ENCODE measurements at regions of chr3 and their contacts with region 1.

Region 1: GRCh38 chr3:149120051-149120972 is 9.1 kb upstream of the HPS3 start:
- DNase-seq: no peak
- H3K4me3 Mint-ChIP-seq: no peak overlapping the region
- H3K27ac Mint-ChIP-seq: no peak overlapping the region
- H3K4me1 Mint-ChIP-seq: peaks cover 5% of the 10 kb centered on the region
- H3K27me3 Mint-ChIP-seq: peaks cover 13% of the 10 kb centered on the region

Region 2: GRCh38 chr3:148955544-148956346 is 164.6 kb before region 1 on chr3:
- CTCF ChIA-PET with region 1: interaction called, 47 read pairs
- DNase-seq: peak; percentile 34
- H3K4me3 Mint-ChIP-seq: no peak overlapping the region
- H3K27ac Mint-ChIP-seq: no peak overlapping the region
- H3K4me1 Mint-ChIP-seq: peaks cover 9% of the 10 kb centered on the region
- H3K27me3 Mint-ChIP-seq: peaks cover 3% of the 10 kb centered on the region

Region 3: DNA sequence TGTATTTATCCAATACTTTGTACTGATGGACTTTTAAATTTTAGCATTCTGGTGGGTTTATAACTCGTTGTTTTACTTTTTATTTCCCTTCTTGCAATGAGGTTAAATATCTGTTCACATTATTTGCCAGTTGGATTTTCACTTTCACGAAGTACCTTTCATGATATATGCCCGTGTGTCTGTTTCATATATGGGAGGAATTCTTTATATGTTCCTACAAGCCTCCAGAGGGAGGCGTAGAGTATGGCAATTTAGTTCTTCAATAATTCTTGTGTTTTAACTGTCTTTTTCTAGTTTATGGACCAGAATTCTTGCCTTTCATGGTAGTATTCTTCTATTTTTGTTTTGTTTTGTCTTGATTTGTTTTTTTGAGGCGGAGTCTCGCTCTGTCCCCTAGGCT is 805.5 kb after region 1 on chr3:
- CTCF ChIA-PET with region 1: no interaction called
- DNase-seq: no peak
- H3K4me3 Mint-ChIP-seq: no peak overlapping the region
- H3K27ac Mint-ChIP-seq: no peak overlapping the region
- H3K4me1 Mint-ChIP-seq: no peaks in the 10 kb centered on the region
- H3K27me3 Mint-ChIP-seq: no peaks in the 10 kb centered on the region

Measured in activated naive CD4-positive, alpha-beta T cell treated with anti-CD3 and anti-CD28 coated beads, Interleukin-2, amount 10 ng/mL, durations not matched to agents 7 days and 5 days (primary cell).